ENCODE measurements at regions of chr3 and their contacts with region 1.

Region 1: DNA sequence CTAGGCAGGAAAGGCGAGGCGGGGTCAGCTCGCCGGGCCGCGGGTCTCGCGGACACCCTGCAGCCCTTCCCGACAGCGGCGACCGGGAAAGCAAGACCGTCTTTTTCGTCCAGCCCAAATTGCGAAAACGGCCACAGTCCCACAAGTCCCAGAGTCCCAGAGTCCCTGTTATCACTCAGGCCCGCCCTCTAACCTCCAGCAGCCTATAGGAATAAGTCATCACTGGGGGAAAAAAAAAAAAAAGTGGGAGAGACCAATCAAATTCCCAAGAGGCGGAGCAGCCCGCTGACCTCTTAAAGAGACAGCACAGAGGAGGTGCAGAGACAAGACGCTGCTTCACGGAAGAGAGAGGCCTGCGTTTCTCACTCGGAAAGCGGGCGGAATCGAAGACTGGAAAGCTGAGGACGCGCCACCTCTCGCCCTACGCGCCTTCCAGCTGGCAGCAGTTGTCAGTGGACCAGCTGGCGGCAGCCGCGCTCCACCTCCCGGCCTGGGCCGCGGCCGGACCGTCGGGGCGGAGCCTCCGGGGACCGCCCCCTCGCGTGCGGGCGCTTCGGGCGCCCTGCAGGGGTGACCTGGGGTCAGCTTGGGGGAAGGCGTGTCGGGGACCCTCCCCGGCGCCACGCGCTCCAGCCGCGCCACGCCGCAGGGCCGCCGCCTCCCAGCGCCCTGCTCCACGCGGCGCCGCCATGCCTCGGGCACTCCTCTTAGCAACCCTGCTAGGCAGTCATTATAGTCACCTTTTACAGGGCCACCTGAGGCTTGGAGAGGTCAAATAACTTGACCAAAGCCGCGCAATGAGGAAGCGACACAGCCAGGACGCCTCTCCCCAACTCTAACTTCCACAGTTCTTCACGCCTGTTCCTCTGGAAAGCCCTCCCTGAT is at the start of gene TPRA1:
- DNase-seq: peak; percentile 98
- H3K4me3 ChIP-seq: peak within 1 kb of the TSS; percentile 83 to 88 (median 87)
- H3K27ac ChIP-seq: peak within 1 kb of the TSS; percentile 91
- H3K4me1 ChIP-seq: peaks cover 21% of the 10 kb centered on the region
- H3K27me3 ChIP-seq: no peaks in the 10 kb centered on the region
- CTCF ChIP-seq: peak in 1 of 2 donors; percentile 36
- total RNA-seq, gene TPRA1: 30.3 to 44.5 TPM

Region 2: GRCh38 chr3:127615631-127616305 is 24.9 kb after region 1 on chr3:
- CTCF ChIA-PET with region 1: no interaction called
- dilution Hi-C with region 1: no loop called
- in situ Hi-C with region 1: no loop called
- intact Hi-C with region 1: no loop called
- DNase-seq: no peak
- H3K4me3 ChIP-seq: no peak overlapping the region
- H3K27ac ChIP-seq: no peak overlapping the region
- H3K4me1 ChIP-seq: no peaks in the 10 kb centered on the region
- H3K27me3 ChIP-seq: no peaks in the 10 kb centered on the region
- CTCF ChIP-seq: no peak

Region 3: GRCh38 chr3:127652231-127652995 is 61.6 kb after region 1 on chr3:
- CTCF ChIA-PET with region 1: no interaction called
- dilution Hi-C with region 1: no loop called
- in situ Hi-C with region 1: no loop called
- intact Hi-C with region 1: loop called (anchors 2 kb)
- DNase-seq: no peak
- H3K4me3 ChIP-seq: no peak overlapping the region
- H3K27ac ChIP-seq: no peak overlapping the region
- H3K4me1 ChIP-seq: no peaks in the 10 kb centered on the region
- H3K27me3 ChIP-seq: no peaks in the 10 kb centered on the region
- CTCF ChIP-seq: peak; percentile 69 to 91

Region 4: DNA sequence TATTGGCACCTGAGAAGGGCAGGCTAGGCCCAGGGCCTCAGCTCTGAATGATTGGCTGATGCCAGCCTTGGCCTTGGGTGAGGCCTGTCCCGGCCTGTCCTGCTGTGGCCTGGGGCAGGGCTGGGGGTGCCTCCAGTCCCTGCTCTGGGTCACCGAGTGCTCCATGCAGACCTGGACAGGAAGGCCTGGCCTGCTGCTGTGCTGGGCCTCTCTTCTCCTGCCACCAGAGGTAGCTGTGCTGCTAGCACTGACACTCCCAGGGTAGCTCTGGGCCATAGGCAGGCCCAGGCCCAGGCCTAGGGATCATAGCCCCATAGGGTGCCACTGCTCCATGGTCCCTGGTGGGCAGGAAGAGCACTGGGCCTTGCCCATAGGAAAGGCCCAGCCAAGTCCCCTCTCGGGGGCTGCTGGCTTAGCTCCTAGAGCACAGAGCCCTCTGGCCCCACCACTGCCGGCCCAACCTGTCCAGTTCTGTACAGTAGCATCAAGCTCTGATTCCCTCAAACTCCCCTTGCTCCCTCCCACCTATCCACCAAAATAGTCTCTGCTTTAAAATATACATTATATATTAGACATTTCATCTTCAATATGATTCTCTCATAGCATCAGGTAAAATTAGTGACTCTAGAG is 100.1 kb after region 1 on chr3:
- CTCF ChIA-PET with region 1: no interaction called
- dilution Hi-C with region 1: no loop called
- in situ Hi-C with region 1: no loop called
- intact Hi-C with region 1: loop called (anchors 1 kb)
- DNase-seq: peak; percentile 66
- H3K4me3 ChIP-seq: no peak overlapping the region
- H3K27ac ChIP-seq: peak overlapping the region; percentile 42
- H3K4me1 ChIP-seq: peaks cover 24% of the 10 kb centered on the region
- H3K27me3 ChIP-seq: no peaks in the 10 kb centered on the region
- CTCF ChIP-seq: peak; percentile 76 to 91

Region 5: DNA sequence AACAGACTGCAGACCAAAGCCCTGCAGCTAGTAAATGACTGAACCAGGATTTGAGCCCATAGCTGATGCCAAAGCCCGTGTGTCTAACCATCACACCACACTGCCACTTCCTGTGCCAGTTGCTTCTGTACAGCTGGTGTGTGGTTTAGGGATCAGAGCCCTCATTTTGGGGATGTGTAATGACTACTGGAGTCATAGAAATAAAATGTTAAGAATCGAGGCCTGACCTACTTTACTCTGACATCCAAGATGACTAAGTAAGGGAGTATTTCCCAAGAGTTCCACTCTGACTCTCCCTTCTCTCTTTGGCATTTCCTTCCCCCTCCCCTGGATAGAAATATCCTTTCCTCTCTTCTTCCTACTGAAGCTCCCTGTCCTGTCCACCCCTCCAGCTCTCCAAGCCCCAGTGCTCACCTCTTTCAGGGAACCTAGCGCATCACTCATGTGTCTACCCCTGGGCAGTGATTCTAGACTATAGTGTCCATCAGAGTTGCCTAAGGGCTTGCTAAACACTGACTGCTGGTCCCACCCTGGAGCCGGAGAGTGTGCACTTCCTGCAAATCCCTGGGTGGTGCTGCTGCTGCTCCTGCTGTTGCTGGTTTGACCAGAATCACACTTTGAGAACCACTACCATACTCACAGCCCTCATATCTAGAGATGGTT is 177.6 kb after region 1 on chr3:
- CTCF ChIA-PET with region 1: no interaction called
- dilution Hi-C with region 1: no loop called
- in situ Hi-C with region 1: no loop called
- intact Hi-C with region 1: loop called (anchors 1 kb)
- DNase-seq: peak; percentile 93
- H3K4me3 ChIP-seq: no peak overlapping the region
- H3K27ac ChIP-seq: peak overlapping the region; percentile 46
- H3K4me1 ChIP-seq: peaks cover 22% of the 10 kb centered on the region
- H3K27me3 ChIP-seq: no peaks in the 10 kb centered on the region
- CTCF ChIP-seq: no peak

Region 6: DNA sequence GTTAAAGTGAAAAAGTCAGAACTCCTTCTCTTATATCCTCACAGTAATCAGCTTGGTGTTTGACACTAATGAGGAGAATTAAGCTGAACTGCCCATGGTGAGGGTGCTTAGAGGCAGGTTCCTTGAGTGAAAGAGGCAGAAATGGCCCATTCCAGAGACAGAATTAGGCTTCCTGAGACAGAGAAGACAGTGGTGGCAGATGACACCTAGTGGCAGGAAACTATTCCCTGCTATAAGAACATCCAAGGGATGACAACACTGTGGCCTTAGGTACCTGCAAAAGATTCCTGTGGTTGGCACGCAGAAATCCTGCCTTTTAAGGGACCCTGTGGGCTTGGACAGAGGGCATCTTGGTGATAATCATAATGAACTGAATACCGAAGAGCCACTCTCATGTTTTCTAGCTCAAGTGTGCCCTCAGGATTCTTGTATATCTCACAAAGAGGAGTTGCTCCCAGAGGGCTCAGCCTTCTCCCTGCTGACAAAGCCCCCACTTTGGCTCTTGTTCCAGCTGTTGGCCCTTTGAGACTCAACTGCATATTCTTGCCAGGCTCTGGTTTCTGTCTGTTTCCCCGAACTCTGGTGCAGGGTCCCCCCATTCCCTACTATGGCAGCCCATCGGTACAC is 380.2 kb after region 1 on chr3:
- CTCF ChIA-PET with region 1: no interaction called
- dilution Hi-C with region 1: no loop called
- in situ Hi-C with region 1: no loop called
- intact Hi-C with region 1: loop called (anchors 1 kb)
- DNase-seq: peak; percentile 41
- H3K4me3 ChIP-seq: no peak overlapping the region
- H3K27ac ChIP-seq: no peak overlapping the region
- H3K4me1 ChIP-seq: no peaks in the 10 kb centered on the region
- H3K27me3 ChIP-seq: no peaks in the 10 kb centered on the region
- CTCF ChIP-seq: peak; percentile 83 to 87

Region 7: GRCh38 chr3:128060473-128061381 is 469.9 kb after region 1 on chr3:
- CTCF ChIA-PET with region 1: no interaction called
- dilution Hi-C with region 1: no loop called
- in situ Hi-C with region 1: no loop called
- intact Hi-C with region 1: loop called (anchors 2 kb)
- DNase-seq: peak; percentile 91
- H3K4me3 ChIP-seq: no peak overlapping the region
- H3K27ac ChIP-seq: peak overlapping the region; percentile 70
- H3K4me1 ChIP-seq: peaks cover 27% of the 10 kb centered on the region
- H3K27me3 ChIP-seq: no peaks in the 10 kb centered on the region
- CTCF ChIP-seq: no peak